K562 (cell line): ENCODE measurements at regions of chr11 and their contacts with region 1.

Region 1: GRCh38 chr11:58579192-58580129 is 598 bp downstream of the ZFP91 start:
- DNase-seq: peak; percentile 74 to 95 (median 78)
- ATAC-seq: peak; percentile 72
- H3K4me3 ChIP-seq: peak overlapping the region; percentile 87
- H3K27ac ChIP-seq: peak overlapping the region; percentile 98
- H3K4me1 ChIP-seq: peaks cover 12 to 18% of the 10 kb centered on the region in 2 experiments
- H3K27me3 ChIP-seq: no peaks in the 10 kb centered on the region
- CTCF ChIP-seq: peak; percentile 68 to 85 (median 74)
- EP300 ChIP-seq: peak; percentile 54; the same call in 1 of the 2 replicates
- POLR2A ChIP-seq: peak; percentile 88
- RAD21 ChIP-seq: no peak

Region 2: DNA sequence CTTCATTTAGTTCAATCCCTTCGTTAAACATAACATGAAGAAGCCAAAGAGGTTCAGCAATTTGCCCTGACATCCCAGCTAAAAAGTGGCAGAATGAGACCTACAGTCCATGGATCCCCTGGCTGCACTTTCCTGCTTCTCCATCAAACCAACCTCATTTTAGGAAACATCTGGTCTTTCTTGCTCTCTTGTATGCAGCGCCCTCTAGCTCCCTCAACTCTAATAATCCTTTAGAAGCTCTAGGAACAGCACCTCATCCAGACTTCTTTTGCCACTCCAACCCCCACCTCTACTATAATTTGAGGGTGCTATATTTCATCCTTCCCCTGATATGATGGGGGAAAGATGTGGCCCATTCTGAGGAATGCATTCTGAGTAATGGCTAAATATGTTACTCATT is 50.4 kb after region 1 on chr11:
- CTCF ChIA-PET with region 1: interaction called, 6 read pairs
- POLR2A ChIA-PET with region 1: no interaction called
- in situ Hi-C with region 1: no loop called
- intact Hi-C with region 1: loop called (anchors 1 kb)
- DNase-seq: peak; percentile 22 to 69 (median 38)
- ATAC-seq: peak; percentile 86
- H3K4me3 ChIP-seq: no peak overlapping the region
- H3K27ac ChIP-seq: no peak overlapping the region
- H3K4me1 ChIP-seq: no peaks in the 10 kb centered on the region
- H3K27me3 ChIP-seq: no peaks in the 10 kb centered on the region
- CTCF ChIP-seq: peak; percentile 73 to 82 (median 75)
- EP300 ChIP-seq: no peak
- POLR2A ChIP-seq: no peak
- RAD21 ChIP-seq: peak; percentile 42 to 71; a peak in 3 of 4 replicates

Region 3: GRCh38 chr11:58675334-58676155 is 96.1 kb after region 1 on chr11:
- CTCF ChIA-PET with region 1: no interaction called
- POLR2A ChIA-PET with region 1: no interaction called
- in situ Hi-C with region 1: no loop called
- intact Hi-C with region 1: loop called (anchors 1 kb)
- DNase-seq: peak; percentile 73 to 84 (median 78)
- ATAC-seq: peak; percentile 99
- H3K4me3 ChIP-seq: no peak overlapping the region
- H3K27ac ChIP-seq: no peak overlapping the region
- H3K4me1 ChIP-seq: no peaks in the 10 kb centered on the region; a peak in 1 of 5 replicates
- H3K27me3 ChIP-seq: peaks cover 0 to 11% of the 10 kb centered on the region in 2 experiments; a peak in 1 of 5 replicates
- CTCF ChIP-seq: peak; percentile 83 to 97 (median 86)
- EP300 ChIP-seq: no peak
- POLR2A ChIP-seq: no peak
- RAD21 ChIP-seq: peak; percentile 71 to 78

Region 4: DNA sequence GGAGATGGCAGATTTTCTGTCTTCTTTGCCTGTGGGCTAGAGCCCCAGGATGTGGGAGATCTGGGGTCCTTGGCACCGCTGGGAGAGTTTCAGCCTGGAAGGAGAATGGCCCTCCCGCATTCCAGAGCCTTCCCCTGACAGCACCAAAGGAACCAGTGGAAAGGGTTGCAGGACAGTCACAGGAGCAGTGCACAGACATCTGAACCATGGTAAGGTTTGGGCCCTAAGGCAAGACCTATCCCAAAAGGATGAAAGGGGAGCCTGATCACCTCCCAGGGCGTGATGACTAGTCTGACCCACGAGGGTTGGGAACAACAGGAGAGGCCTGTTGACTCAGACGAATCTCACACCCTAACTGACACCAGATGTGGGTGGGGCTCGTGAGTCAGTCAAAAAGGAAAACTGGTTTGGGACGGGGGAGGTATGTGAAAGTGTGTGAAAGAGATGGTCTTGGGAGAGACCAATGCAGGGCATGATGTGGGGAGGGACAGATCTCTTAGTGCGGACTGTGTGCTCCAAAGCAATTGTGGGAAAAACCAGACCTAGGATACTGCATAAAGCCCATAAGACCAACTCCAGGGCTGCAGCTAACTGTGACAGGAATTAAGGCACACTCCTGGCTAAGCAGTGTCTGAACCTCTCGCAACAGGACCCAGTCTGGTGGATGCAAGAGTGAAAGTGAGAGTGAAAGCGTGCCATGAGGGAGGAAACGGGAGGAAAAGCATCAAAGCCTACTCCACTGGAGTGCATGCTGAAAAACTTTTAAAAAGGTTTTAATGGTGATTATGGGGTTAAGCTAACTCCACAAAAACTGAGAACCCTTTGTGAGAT is 191.4 kb after region 1 on chr11:
- CTCF ChIA-PET with region 1: no interaction called
- POLR2A ChIA-PET with region 1: interaction called, 3 read pairs
- in situ Hi-C with region 1: no loop called
- intact Hi-C with region 1: loop called (anchors 5 kb)
- DNase-seq: peak; percentile 56 to 96 (median 68)
- ATAC-seq: peak; percentile 88
- H3K4me3 ChIP-seq: peak overlapping the region; percentile 16; the same call in 1 of the 2 replicates
- H3K27ac ChIP-seq: peak overlapping the region; percentile 81
- H3K4me1 ChIP-seq: peaks cover 11 to 78% of the 10 kb centered on the region in 2 experiments
- H3K27me3 ChIP-seq: no peaks in the 10 kb centered on the region
- CTCF ChIP-seq: no peak
- EP300 ChIP-seq: peak; percentile 79
- POLR2A ChIP-seq: peak; percentile 73
- RAD21 ChIP-seq: peak in 1 of 2 experiments; percentile 9; a peak in 1 of 4 replicates

Region 5: GRCh38 chr11:58900479-58901420 is 321.3 kb after region 1 on chr11:
- CTCF ChIA-PET with region 1: interaction called, 5 read pairs
- POLR2A ChIA-PET with region 1: interaction called, 3 read pairs
- in situ Hi-C with region 1: no loop called
- intact Hi-C with region 1: loop called (anchors 2 kb)
- DNase-seq: peak; percentile 59 to 82 (median 72)
- ATAC-seq: peak; percentile 98
- H3K4me3 ChIP-seq: no peak overlapping the region
- H3K27ac ChIP-seq: no peak overlapping the region
- H3K4me1 ChIP-seq: peaks cover 0 to 5% of the 10 kb centered on the region in 2 experiments; a peak in 2 of 5 replicates
- H3K27me3 ChIP-seq: peaks cover 3 to 7% of the 10 kb centered on the region in 2 experiments; a peak in 2 of 5 replicates
- CTCF ChIP-seq: peak; percentile 73 to 88 (median 86)
- EP300 ChIP-seq: no peak
- POLR2A ChIP-seq: no peak
- RAD21 ChIP-seq: peak; percentile 87 to 89

Region 6: DNA sequence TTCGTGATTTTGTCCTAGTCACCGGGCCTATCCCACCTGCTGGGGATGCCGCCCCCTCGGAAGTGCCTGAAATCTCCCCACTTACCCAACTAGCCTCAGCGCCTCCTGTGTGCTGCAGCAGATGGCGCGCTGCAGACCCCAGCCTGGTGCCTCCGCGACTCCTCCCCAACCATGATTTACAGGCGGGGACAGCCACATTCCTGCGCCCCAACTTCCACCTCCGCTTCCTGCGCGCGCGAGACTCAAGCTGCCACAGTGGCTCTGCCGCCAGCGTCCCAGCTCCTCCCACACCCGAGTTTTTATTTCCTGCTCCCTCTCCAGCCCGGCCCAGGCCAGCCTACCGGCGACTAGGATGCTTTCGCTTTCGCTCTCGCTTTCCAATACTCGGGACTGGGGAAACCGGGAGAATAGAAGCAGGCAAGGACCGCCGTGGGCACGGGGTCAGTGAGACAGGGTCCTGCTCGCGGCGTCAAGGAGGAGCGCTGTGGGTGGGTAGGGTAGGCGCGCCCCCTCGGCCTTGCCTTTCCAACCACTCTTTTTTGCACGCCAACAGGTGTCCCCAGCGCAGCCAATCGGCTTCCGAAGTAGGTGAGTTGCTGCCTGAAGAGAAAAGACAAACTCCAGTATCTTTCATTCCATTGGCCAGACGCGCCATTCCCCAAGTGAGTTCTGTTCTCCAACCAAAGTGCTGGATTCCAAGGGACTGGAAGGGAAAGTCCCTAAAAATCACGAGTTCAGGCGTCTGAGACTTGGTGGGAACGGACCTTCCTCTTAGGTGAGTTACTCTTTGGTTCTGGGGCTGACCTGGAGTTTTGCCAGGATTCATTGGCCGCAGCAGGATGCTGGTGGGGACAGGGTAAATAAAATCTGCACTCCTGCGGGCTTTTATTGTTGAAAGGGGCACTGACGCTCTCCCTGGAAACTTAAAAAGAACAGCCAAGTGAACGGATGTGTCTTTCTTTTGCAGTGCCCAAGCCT is 563.4 kb after region 1 on chr11 and contains the start of gene FAM111A:
- CTCF ChIA-PET with region 1: no interaction called
- POLR2A ChIA-PET with region 1: no interaction called
- in situ Hi-C with region 1: no loop called
- intact Hi-C with region 1: loop called (anchors 10 kb)
- DNase-seq: peak; percentile 67 to 82 (median 72)
- ATAC-seq: peak; percentile 85
- H3K4me3 ChIP-seq: peak within 1 kb of the TSS; percentile 74
- H3K27ac ChIP-seq: peak within 1 kb of the TSS; percentile 55; the same call in 2 of the 3 replicates
- H3K4me1 ChIP-seq: peaks cover 14 to 19% of the 10 kb centered on the region in 2 experiments
- H3K27me3 ChIP-seq: no peaks in the 10 kb centered on the region
- CTCF ChIP-seq: peak; percentile 43 to 46 (median 44); a peak in 5 of 6 replicates
- EP300 ChIP-seq: no peak
- POLR2A ChIP-seq: peak; percentile 66
- RAD21 ChIP-seq: peak in 1 of 2 experiments; percentile 27; a peak in 2 of 4 replicates
- polyA plus RNA-seq, gene FAM111A: 14.8 to 16.5 TPM